ENCODE measurements at regions of chr1 and their contacts with region 1.

Region 1: GRCh38 chr1:147172168-147172992 is at the start of gene PRKAB2:
- DNase-seq: peak; percentile 91 to 96 (median 95)
- H3K4me3 ChIP-seq: peak within 1 kb of the TSS; percentile 70 to 99 (median 91)
- H3K27ac ChIP-seq: peak within 1 kb of the TSS; percentile 65 to 99 (median 94)
- H3K27me3 ChIP-seq: no peaks in the 10 kb centered on the region
- CTCF ChIP-seq: peak; percentile 69 to 99 (median 92)
- total RNA-seq, gene PRKAB2: 12.3 to 42.9 (median 24.3) TPM

Region 2: GRCh38 chr1:147264158-147264768 is 91.9 kb after region 1 on chr1:
- intact Hi-C with region 1: loop called in 1 of 2 experiments (anchors 2 kb)
- DNase-seq: no peak
- H3K4me3 ChIP-seq: no peak overlapping the region
- H3K27ac ChIP-seq: peak overlapping the region in 20 of 59 donors; percentile 1 to 96 (median 88)
- H3K27me3 ChIP-seq: no peaks in the 10 kb centered on the region
- CTCF ChIP-seq: no peak

Measured in dorsolateral prefrontal cortex (tissue), 120 donors.